Activated T-helper 2 cell treated with anti-CD3 and anti-CD28 coated beads, Interferon-gamma antibody, Interleukin-2, Interleukin-4, amounts not matched to agents 10 μg/mL and 5 μg/mL and 100 μg/mL, durations not matched to agents 14 hours and 24 hours and 36 hours (primary cell): ENCODE measurements at regions of chr19 and their contacts with region 1.

Region 1: GRCh38 chr19:17390665-17391370 is 3.2 kb downstream of the CCDC194 start:
- DNase-seq: peak; percentile 87
- H3K4me3 Mint-ChIP-seq: peak overlapping the region; percentile 93
- H3K27ac Mint-ChIP-seq: no peak overlapping the region
- H3K4me1 Mint-ChIP-seq: peaks cover 15% of the 10 kb centered on the region
- H3K27me3 Mint-ChIP-seq: peaks cover 17% of the 10 kb centered on the region

Region 2: GRCh38 chr19:17292286-17293097 is 98.3 kb before region 1 on chr19:
- intact Hi-C with region 1: loop called (anchors 2 kb)
- DNase-seq: peak; percentile 74
- H3K4me3 Mint-ChIP-seq: peak overlapping the region; percentile 87
- H3K27ac Mint-ChIP-seq: peak overlapping the region; percentile 78
- H3K4me1 Mint-ChIP-seq: peaks cover 8% of the 10 kb centered on the region
- H3K27me3 Mint-ChIP-seq: no peaks in the 10 kb centered on the region

Region 3: DNA sequence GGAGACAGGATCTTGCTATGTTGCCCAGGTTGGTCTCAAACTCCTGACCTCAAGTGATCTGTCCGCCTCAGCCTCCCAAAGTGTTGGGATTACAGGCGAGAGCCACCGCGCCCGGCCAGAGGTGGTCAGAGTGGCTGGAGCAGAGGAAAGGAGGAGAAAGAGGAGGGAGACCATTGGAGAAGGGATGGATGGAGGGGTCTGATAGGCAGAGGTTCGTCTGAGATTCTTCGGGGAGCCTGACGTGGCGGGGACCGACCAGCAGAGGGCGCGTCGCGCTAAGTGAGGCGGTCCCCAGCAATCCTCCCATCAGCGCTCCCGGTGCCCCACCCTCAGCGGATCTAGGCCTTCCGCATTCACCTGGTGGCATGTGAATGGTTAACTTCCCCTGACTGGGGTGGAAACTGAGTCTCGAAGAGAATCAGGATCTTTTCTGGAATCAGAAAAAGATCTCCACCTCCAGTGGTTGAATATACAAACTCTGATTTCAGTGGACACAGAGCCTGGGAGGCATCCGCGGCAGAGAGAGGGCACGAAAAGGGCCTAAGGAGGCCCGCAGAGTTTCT is 44.6 kb before region 1 on chr19:
- intact Hi-C with region 1: loop called (anchors 1 kb)
- DNase-seq: peak; percentile 70
- H3K4me3 Mint-ChIP-seq: no peak overlapping the region
- H3K27ac Mint-ChIP-seq: no peak overlapping the region
- H3K4me1 Mint-ChIP-seq: peaks cover 7% of the 10 kb centered on the region
- H3K27me3 Mint-ChIP-seq: peaks cover 11% of the 10 kb centered on the region

Region 4: GRCh38 chr19:17469481-17470067 is 78.8 kb after region 1 on chr19:
- intact Hi-C with region 1: loop called (anchors 1 kb)
- DNase-seq: peak; percentile 81
- H3K4me3 Mint-ChIP-seq: peak overlapping the region; percentile 94
- H3K27ac Mint-ChIP-seq: peak overlapping the region; percentile 79
- H3K4me1 Mint-ChIP-seq: peaks cover 20% of the 10 kb centered on the region
- H3K27me3 Mint-ChIP-seq: peaks cover 6% of the 10 kb centered on the region

Region 5: GRCh38 chr19:17487318-17488121 is 96.7 kb after region 1 on chr19:
- intact Hi-C with region 1: no loop called
- DNase-seq: no peak
- H3K4me3 Mint-ChIP-seq: no peak overlapping the region
- H3K27ac Mint-ChIP-seq: no peak overlapping the region
- H3K4me1 Mint-ChIP-seq: peaks cover 17% of the 10 kb centered on the region
- H3K27me3 Mint-ChIP-seq: no peaks in the 10 kb centered on the region